HEK293 (cell line): ENCODE measurements at regions of chr15 and their contacts with region 1.

Region 1: DNA sequence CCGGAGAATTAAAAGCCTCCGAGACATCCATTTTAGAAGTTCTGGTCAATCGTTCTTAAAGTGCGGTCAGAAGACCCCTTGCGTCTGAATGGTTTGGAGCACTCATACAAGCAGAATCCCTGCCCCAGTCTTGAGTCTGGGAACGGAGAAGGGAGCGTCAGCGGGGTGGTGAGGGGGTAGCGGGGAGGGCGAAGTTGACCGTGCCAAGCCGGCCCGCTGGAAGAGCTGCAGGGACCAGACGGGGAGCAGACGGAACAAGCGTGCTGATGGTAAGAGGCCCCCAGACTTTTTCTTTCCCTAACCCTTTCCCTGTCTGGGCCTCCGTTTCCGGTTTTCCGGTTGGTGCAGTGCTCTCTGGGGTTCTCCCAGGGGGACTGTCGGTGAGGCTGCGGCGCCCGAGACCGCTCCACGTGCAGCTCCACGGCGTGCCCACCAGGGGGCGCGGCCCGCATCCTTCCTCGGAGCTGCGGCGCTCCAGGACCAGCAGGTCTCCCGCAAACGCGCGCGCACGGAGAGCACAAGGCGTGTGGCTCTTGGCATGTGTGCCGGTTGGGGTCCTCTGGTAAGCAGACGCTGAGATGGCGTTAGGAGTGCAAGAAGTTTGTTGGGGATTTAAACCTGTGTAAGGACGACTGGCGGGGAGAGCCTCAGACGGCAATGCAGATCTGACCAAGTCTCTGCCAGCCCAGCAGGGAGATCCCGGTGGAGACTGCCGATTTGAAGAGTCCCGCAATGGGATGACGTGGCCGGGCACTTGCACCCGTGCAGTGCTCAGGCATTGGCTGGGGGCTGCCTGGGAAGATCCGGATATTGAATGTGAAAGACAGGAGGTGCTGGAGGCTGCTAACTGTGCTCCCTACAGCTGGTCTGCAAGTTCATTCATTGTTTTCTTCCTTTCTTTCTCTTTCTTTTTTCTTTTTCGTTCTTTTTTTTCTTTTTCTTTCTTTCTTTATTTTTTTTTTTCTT is 19.2 kb upstream of the CORO2B start:
- H3K4me3 ChIP-seq: peak overlapping the region; percentile 44
- H3K27ac ChIP-seq: no peak overlapping the region
- H3K4me1 ChIP-seq: no peaks in the 10 kb centered on the region
- CTCF ChIP-seq: peak; percentile 99

Region 2: DNA sequence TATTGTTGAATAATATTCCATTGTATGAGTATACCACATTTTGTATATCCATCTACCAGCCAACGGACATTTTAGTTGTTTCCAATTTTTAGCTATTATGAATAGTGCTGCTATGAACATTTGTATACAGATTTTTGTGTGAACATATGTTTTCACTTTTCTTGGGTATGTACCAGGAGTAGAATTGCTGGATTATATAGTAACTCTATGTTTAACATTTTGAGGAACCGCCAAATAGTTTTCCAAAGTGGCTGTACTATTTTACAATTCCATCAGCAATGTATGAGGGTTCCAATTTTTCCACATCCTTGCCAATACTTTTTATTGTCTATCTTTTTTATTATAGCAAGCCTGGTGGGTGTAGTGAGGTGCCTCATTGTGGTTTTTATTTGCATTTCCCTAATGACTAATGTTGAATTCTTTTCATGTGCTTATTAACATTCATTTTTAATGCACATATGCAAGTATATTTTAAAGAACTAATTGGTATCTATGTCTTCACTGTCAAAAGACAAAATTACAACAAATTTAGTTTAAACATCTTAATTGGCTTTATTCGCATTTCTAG is 583.0 kb before region 1 on chr15:
- CTCF ChIA-PET with region 1: no interaction called
- POLR2A ChIA-PET with region 1: no interaction called
- H3K4me3 ChIP-seq: no peak overlapping the region
- H3K27ac ChIP-seq: no peak overlapping the region
- H3K4me1 ChIP-seq: no peaks in the 10 kb centered on the region
- CTCF ChIP-seq: no peak

Region 3: GRCh38 chr15:68383161-68384074 is 176.2 kb before region 1 on chr15:
- CTCF ChIA-PET with region 1: no interaction called
- POLR2A ChIA-PET with region 1: no interaction called
- H3K4me3 ChIP-seq: no peak overlapping the region
- H3K27ac ChIP-seq: no peak overlapping the region
- H3K4me1 ChIP-seq: no peaks in the 10 kb centered on the region
- CTCF ChIP-seq: peak; percentile 46; the same call in 1 of the 2 replicates

Region 4: GRCh38 chr15:68572921-68573320 is 13.3 kb after region 1 on chr15:
- CTCF ChIA-PET with region 1: interaction called, 14 read pairs
- POLR2A ChIA-PET with region 1: interaction called, 3 read pairs
- H3K4me3 ChIP-seq: no peak overlapping the region
- H3K27ac ChIP-seq: no peak overlapping the region
- H3K4me1 ChIP-seq: peaks cover 3% of the 10 kb centered on the region; the same call in 1 of the 2 replicates
- CTCF ChIP-seq: no peak

Region 5: DNA sequence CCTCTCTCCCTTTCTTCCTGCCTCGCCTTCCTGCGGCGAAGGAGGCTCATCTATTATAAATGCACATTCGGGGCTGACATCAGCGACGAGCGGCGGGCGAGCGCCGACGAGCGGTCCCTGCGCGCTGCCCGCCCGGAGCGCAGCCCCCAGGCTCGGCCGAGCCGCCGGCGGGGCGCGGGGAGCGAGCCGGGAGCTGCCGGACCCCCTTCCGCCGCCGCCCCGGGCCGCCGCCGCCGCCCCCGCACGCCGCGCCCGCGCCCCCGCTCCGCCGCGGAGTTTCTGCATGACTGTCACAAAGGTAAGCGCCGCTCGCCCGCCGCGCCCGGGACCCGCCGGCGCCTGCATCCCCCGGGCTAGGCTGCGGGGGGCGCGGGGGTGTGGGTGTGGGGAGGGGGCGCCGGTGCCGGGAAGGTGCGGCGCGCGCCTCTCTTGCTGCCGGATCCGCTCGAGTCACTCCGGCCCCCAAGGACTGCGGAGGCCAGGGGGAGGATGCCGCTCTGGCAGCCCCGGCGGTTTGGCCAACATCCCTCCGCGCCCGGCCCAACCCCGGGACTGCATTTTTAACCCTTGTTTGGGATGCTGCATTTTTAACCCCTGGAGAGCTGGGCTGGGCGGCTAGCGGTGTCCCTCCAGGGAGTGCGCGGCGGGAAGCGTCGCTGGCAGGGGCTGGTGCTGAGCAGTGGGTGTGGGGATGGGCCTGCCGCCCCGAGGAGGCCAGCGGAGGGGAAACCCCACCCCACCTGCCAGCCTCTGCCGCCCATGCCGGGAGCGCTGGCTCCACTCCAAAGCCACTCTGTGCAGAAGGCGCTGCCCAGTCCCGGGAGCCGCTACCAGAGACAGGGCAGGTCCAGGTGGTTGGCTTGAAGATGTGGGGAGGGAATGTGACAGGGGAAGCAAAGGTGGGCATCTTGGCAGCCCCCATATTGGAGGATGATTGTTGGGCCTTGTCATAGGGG is 19.6 kb after region 1 on chr15 and contains the start of gene CORO2B:
- CTCF ChIA-PET with region 1: interaction called, 17 read pairs
- POLR2A ChIA-PET with region 1: interaction called, 3 read pairs
- H3K4me3 ChIP-seq: peak within 1 kb of the TSS; percentile 37
- H3K27ac ChIP-seq: peak within 1 kb of the TSS; percentile 81; the same call in 1 of the 2 replicates
- H3K4me1 ChIP-seq: peaks cover 13% of the 10 kb centered on the region
- CTCF ChIP-seq: peak; percentile 30

Region 6: GRCh38 chr15:68650901-68651709 is 91.5 kb after region 1 on chr15:
- CTCF ChIA-PET with region 1: interaction called, 25 read pairs
- POLR2A ChIA-PET with region 1: no interaction called
- H3K4me3 ChIP-seq: no peak overlapping the region
- H3K27ac ChIP-seq: no peak overlapping the region
- H3K4me1 ChIP-seq: peaks cover 3% of the 10 kb centered on the region; the same call in 1 of the 2 replicates
- CTCF ChIP-seq: 0 out of 2 replicates have a peak, but pooled peaks have one; percentile 42

Region 7: DNA sequence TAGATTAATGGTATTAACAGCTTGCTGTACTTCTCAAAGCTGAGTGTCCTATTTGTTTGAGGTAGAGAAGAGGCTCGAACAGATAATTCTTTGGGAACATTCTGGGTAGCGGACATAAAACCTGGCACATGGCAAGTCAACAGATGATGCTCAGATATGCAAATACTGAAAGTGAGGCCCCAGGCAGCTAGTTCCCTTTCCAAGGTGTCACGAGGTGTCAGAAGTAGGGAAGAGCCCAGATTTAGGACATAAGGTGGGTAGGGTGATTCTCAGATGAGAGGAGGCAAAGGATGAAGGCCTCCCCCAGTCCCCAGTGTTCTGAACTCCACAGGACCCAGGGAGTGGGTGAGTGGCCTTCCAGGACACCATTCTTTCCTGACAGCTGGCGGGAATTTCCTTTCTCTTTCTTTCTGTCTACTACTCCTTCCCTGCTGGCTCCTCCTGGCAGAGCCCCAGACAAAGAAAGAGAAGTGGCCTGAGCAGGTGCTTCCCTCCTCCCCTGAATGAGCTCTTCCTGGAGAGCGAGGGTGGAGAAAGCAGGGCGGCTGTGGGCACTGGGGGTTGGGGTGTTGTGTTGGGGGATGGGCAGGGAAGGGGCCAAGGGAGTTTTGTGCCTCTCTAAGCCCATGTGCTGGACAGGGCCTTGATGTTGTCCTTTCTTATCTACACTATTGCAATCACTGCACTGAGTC is 106.6 kb after region 1 on chr15:
- CTCF ChIA-PET with region 1: interaction called, 421 read pairs
- POLR2A ChIA-PET with region 1: no interaction called
- H3K4me3 ChIP-seq: no peak overlapping the region
- H3K27ac ChIP-seq: no peak overlapping the region
- H3K4me1 ChIP-seq: no peaks in the 10 kb centered on the region
- CTCF ChIP-seq: no peak

Region 8: GRCh38 chr15:68679961-68680371 is 120.3 kb after region 1 on chr15:
- CTCF ChIA-PET with region 1: interaction called, 421 read pairs
- POLR2A ChIA-PET with region 1: no interaction called
- H3K4me3 ChIP-seq: no peak overlapping the region
- H3K27ac ChIP-seq: no peak overlapping the region
- H3K4me1 ChIP-seq: no peaks in the 10 kb centered on the region
- CTCF ChIP-seq: no peak

Region 9: DNA sequence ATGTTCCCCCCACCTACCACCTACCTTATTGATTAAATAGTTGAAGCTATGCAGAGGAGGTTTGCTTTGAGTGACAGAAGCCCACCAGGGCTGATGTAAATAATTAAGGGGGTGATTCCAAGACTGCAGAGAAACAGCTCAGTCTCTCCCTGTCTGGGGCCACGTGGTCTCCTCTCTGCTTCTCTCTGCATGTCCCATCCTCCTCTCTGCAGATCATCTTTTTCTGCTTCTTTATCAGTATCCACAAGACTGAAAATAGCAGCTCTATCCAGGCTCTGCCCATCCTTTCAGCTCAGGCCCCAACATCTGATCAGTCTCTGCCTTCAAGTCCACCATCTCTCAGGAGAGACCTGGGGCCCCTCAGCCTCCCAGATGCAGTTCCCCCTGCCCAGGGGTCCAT is 150.2 kb after region 1 on chr15:
- CTCF ChIA-PET with region 1: no interaction called
- POLR2A ChIA-PET with region 1: no interaction called
- H3K4me3 ChIP-seq: no peak overlapping the region
- H3K27ac ChIP-seq: no peak overlapping the region
- H3K4me1 ChIP-seq: no peaks in the 10 kb centered on the region
- CTCF ChIP-seq: no peak